ENCODE measurements at regions of chr2 and their contacts with region 1.

Region 1: GRCh38 chr2:203238704-203239526 is at the start of gene CYP20A1:
- H3K4me3 ChIP-seq: peak within 1 kb of the TSS; percentile 75
- H3K27ac ChIP-seq: peak within 1 kb of the TSS; percentile 88
- H3K4me1 ChIP-seq: no peaks in the 10 kb centered on the region
- CTCF ChIP-seq: peak; percentile 94

Region 2: DNA sequence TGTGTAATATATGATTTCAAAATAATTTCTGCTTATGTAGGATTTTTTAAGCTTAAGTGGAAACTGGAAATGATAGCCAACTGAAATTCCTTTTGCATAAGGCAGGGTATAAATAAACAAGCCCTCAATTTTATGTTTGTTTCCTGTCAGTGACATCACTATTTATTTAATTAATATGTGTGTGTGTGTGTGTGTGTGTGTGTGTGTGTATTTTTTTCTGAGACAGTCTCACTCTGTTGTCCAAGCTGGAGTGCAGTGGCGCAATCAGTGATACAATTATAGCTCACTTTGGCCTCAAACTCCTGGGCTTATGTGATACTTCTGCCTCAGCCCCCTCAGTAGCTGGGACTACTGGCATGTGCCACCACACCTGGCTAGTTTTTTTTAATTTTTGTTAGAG is 29.4 kb before region 1 on chr2:
- CTCF ChIA-PET with region 1: no interaction called
- POLR2A ChIA-PET with region 1: no interaction called
- H3K4me3 ChIP-seq: no peak overlapping the region
- H3K27ac ChIP-seq: no peak overlapping the region
- H3K4me1 ChIP-seq: no peaks in the 10 kb centered on the region
- CTCF ChIP-seq: no peak

Region 3: GRCh38 chr2:203225423-203226039 is 13.4 kb before region 1 on chr2:
- CTCF ChIA-PET with region 1: interaction called, 4 read pairs
- POLR2A ChIA-PET with region 1: interaction called, 12 read pairs
- H3K4me3 ChIP-seq: no peak overlapping the region
- H3K27ac ChIP-seq: no peak overlapping the region
- H3K4me1 ChIP-seq: no peaks in the 10 kb centered on the region
- CTCF ChIP-seq: 0 out of 2 replicates have a peak, but pooled peaks have one; percentile 9

Measured in HEK293 (cell line).